Esophagus squamous epithelium (tissue), 5 donors: ENCODE measurements at regions of chr3 and their contacts with region 1.

Region 1: GRCh38 chr3:32384938-32385337 is 6.7 kb upstream of the CMTM7 start:
- DNase-seq: no peak
- H3K4me3 ChIP-seq: no peak overlapping the region
- H3K27ac ChIP-seq: no peak overlapping the region
- H3K4me1 ChIP-seq: no peaks in the 10 kb centered on the region
- H3K27me3 ChIP-seq: peaks cover 0 to 97% (median 0%) of the 10 kb centered on the region in 4 donors
- CTCF ChIP-seq: no peak
- POLR2A ChIP-seq: no peak

Region 2: DNA sequence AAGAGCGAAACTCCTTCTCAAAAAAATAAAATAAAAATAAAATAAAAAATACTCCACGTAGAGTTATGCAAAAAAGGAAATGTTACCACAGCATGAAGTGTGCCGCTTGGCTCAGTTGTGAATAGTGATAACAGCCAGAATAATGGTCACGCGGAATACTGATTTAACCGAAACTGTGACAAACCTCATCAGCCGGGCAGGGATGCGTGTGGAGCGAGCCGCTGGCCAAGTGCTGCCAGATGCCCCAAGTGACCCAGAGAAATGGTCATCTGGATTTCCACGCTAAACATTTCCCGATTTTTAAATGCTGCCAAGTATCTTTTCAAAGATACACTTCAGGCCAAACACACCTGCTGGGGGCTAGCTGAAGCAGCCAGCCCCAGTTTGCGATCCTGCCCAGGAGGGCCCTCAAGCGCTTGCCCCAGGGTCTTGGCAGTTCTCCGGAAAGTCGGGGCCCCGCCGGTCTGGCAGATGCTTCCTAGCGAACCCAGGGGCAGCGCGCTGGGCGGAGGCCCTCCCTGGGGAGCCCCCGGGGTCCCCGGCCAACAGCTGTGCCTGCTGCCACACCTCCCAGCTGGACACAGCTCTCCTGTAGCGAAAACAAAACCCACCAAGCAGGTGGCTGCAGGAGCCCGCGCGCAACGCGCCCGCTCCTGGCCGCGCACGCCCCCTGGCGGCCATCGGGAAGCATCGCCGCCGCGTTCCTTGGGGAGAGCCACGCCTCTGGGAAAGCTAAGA is 82.6 kb after region 1 on chr3:
- intact Hi-C with region 1: loop called (anchors 5 kb)
- DNase-seq: no peak
- H3K4me3 ChIP-seq: peak overlapping the region; percentile 15 to 69 (median 42)
- H3K27ac ChIP-seq: peak overlapping the region in 1 of 4 donors; percentile 19
- H3K4me1 ChIP-seq: peaks cover 18 to 36% (median 25%) of the 10 kb centered on the region in 3 donors
- H3K27me3 ChIP-seq: peaks cover 0 to 18% (median 0%) of the 10 kb centered on the region in 4 donors
- CTCF ChIP-seq: peak; percentile 96 to 100 (median 97)
- POLR2A ChIP-seq: no peak